ENCODE measurements at regions of chr1 and their contacts with region 1.

Region 1: GRCh38 chr1:221741711-221742554 is at the start of gene DUSP10:
- DNase-seq: peak; percentile 99 to 100
- H3K4me3 ChIP-seq: peak within 1 kb of the TSS; percentile 80 to 87
- H3K27ac ChIP-seq: peak within 1 kb of the TSS; percentile 98
- H3K4me1 ChIP-seq: no peaks in the 10 kb centered on the region
- H3K27me3 ChIP-seq: no peaks in the 10 kb centered on the region
- CTCF ChIP-seq: peak in 1 of 3 experiments; percentile 5
- total RNA-seq, gene DUSP10: 5.7 TPM

Region 2: DNA sequence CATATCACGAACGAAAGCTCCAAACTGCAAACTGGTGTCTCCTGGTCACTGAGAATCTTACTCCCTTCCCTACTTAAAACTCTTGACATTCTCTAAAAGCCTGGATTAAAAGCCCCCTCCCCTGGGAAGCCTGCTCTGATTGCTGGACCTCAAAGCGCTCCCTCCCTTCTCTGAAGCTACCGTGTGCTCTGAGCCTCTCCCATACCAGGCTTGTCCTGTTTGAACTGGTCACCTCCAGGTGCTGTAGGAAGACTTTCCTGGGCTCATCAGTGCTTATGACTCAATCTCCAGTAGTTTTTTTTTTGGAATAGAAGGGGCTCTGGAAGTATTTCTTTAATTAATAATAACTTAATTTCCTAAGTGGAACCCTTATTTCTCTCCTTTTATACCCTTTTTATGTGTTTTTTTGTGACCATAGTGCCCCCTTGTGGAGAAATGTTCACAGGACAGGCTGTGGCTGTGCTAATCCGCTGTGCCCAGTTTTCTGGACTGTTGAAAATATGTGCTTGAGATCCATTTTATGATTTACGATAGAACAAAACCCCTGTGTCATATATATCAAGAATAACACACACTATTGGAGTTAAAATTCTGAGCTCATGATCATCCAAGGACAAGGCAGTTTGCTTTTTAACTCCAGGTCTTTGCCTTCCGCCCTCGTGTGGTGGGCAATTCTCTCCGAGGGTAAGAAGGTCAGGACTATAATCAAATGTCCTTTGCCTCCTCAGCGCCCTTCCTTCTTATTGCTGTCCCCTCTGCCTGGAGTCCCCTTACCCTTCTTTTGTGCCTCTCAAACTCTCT is 938.3 kb before region 1 on chr1:
- intact Hi-C with region 1: loop called (anchors 10 kb)
- DNase-seq: no peak
- H3K4me3 ChIP-seq: no peak overlapping the region
- H3K27ac ChIP-seq: peak overlapping the region; percentile 58 to 68
- H3K4me1 ChIP-seq: peaks cover 0 to 5% of the 10 kb centered on the region in 2 donors
- H3K27me3 ChIP-seq: no peaks in the 10 kb centered on the region
- CTCF ChIP-seq: peak; percentile 16 to 78 (median 69)

Region 3: DNA sequence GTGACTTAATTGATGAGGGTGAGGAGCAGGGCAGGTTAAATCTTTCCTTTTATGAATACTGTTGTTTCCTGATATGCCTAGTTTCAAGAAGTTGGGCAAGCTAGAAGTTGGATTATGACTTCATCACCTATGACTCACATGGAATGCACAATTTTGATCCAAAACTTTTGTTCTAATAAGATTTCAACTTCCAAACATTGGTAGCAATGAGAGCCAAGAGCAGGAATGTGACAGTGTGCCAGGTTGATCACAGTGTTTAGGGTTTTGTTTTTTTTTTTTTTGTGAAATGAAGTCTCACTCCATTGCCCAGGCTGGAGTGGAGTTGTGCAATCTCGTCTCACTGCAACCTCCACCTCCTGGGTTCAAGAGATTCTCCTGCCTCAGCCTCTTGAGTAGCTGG is 349.5 kb before region 1 on chr1:
- intact Hi-C with region 1: loop called (anchors 2 kb)
- DNase-seq: peak in 1 of 2 donors; percentile 84
- H3K4me3 ChIP-seq: no peak overlapping the region
- H3K27ac ChIP-seq: peak overlapping the region in 1 of 2 donors; percentile 67
- H3K4me1 ChIP-seq: no peaks in the 10 kb centered on the region
- H3K27me3 ChIP-seq: no peaks in the 10 kb centered on the region
- CTCF ChIP-seq: no peak

Region 4: GRCh38 chr1:221693087-221693486 is 48.8 kb before region 1 on chr1:
- intact Hi-C with region 1: no loop called
- DNase-seq: no peak
- H3K4me3 ChIP-seq: no peak overlapping the region
- H3K27ac ChIP-seq: no peak overlapping the region
- H3K4me1 ChIP-seq: no peaks in the 10 kb centered on the region
- H3K27me3 ChIP-seq: no peaks in the 10 kb centered on the region
- CTCF ChIP-seq: no peak

Region 5: GRCh38 chr1:222617367-222617951 is 875.5 kb after region 1 on chr1:
- intact Hi-C with region 1: loop called (anchors 2 kb)
- DNase-seq: peak; percentile 84 to 97
- H3K4me3 ChIP-seq: peak overlapping the region; percentile 62 to 68
- H3K27ac ChIP-seq: peak overlapping the region; percentile 43 to 78
- H3K4me1 ChIP-seq: no peaks in the 10 kb centered on the region
- H3K27me3 ChIP-seq: no peaks in the 10 kb centered on the region
- CTCF ChIP-seq: no peak

Region 6: GRCh38 chr1:222713091-222713961 is 971.4 kb after region 1 on chr1:
- intact Hi-C with region 1: loop called (anchors 2 kb)
- DNase-seq: peak; percentile 87 to 96
- H3K4me3 ChIP-seq: peak overlapping the region; percentile 80 to 89
- H3K27ac ChIP-seq: peak overlapping the region; percentile 96 to 99
- H3K4me1 ChIP-seq: peaks cover 0 to 15% of the 10 kb centered on the region in 2 donors
- H3K27me3 ChIP-seq: no peaks in the 10 kb centered on the region
- CTCF ChIP-seq: no peak

Measured in ascending aorta (tissue), 2 donors.